Breast epithelium (tissue), 4 donors: ENCODE measurements at regions of chr14 and their contacts with region 1.

Region 1: DNA sequence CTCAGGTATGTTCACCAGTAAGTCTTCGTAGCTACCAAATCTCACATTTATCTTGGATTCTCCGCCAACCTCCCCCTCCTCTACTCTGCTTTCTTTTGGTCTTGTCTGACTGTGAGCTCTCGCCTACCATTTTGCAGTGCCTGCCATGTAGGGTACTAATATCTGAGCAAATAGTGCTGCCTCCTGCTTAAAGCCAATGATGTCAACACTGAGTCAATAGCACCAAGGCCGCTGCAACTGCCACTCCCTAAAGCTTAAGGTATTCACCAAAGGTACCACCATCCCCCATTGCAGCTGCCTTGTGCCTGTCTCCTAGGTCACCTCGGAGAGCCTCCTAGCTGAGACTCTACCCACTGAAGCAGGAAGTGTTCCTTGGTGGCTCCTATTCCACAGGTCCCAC is 114.8 kb upstream of the FUT8 start:
- DNase-seq: no peak
- H3K4me3 ChIP-seq: no peak overlapping the region
- H3K27ac ChIP-seq: no peak overlapping the region
- H3K4me1 ChIP-seq: no peaks in the 10 kb centered on the region
- H3K27me3 ChIP-seq: no peaks in the 10 kb centered on the region
- CTCF ChIP-seq: no peak
- POLR2A ChIP-seq: no peak

Region 2: DNA sequence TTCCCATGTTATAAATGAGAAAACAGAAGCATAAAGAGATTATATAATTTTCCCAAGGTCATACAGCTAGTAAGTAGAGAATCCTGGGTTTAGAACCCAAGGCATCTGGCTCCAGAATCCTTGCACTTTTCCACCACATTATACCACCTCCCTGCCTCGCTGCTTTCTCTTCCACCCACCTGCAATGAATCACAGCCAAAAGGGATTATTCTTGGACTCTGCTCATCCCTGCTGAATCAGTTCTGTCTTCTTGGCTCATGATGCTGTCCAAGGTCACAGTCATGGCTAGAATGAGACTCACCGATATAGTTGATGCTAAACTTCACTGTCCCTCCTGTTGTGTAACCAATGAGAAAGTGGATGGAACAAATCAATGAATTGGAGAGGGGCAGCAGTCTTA is 471.4 kb after region 1 on chr14:
- intact Hi-C with region 1: loop called (anchors 5 kb)
- DNase-seq: no peak
- H3K4me3 ChIP-seq: no peak overlapping the region
- H3K27ac ChIP-seq: no peak overlapping the region
- H3K4me1 ChIP-seq: no peaks in the 10 kb centered on the region
- H3K27me3 ChIP-seq: no peaks in the 10 kb centered on the region
- CTCF ChIP-seq: no peak
- POLR2A ChIP-seq: no peak